ENCODE measurements at regions of chr14 and their contacts with region 1.

Region 1: DNA sequence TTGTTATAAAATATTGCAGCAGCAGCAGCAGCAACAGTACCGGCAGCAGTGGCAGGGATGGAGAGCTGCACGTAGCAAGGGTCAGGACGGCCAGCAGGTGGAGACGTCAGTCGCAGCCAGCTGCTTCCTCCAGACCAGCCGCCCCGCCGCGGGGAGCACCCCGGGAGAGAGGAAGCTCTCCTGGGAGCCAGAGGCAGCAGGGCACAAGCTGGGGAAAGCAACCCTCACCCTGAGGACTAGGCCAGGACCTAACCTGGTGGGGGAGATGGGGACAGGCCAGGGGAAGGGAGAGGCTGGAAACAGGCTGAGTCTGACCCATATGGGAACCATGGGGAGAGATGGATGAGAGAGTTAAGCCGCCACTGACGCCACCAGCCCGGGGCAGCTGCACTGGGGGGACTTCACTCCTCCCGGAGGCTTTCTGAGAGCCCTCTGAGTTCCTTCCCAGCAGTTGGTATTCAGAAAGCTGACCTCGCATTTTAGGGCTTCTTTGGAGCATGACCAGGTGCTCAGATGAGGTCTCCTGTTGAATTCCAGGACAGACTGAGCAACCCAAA is 56.3 kb downstream of the SPTB start:
- DNase-seq: peak; percentile 82
- H3K4me3 Mint-ChIP-seq: peak overlapping the region; percentile 13
- H3K27ac Mint-ChIP-seq: no peak overlapping the region
- H3K4me1 Mint-ChIP-seq: peaks cover 4% of the 10 kb centered on the region
- H3K27me3 Mint-ChIP-seq: peaks cover 8% of the 10 kb centered on the region

Region 2: DNA sequence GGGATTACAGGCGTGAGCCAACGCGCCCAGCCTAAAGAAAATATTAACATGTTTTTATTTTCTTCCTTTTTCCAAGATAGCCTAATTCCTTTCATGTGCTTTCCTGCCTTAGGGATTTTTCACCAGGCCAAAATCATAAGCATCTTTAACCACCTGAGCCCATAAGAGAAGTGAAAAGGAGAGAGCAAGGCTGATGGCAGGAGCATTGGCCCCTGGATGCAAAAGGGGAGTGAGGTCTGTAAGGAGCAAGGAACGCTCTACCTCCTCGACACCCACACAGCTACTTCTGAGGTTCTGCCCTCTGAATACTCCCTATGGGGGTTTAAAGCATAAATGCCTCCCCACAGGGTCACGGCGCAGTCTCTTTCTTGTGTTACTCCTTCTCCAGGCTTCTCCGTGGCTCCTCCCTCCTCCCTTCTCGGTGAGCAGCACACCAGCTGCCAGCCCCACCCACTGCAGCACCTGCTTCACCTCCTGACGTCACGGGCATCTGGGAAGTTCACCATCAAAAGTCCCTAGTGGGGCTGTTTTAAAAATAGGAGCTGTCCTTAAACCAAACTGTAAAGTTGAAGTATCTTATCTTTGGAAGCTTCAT is 11.1 kb before region 1 on chr14:
- CTCF ChIA-PET with region 1: interaction called, 10 read pairs
- intact Hi-C with region 1: no loop called
- DNase-seq: peak; percentile 86
- H3K4me3 Mint-ChIP-seq: no peak overlapping the region
- H3K27ac Mint-ChIP-seq: no peak overlapping the region
- H3K4me1 Mint-ChIP-seq: peaks cover 7% of the 10 kb centered on the region
- H3K27me3 Mint-ChIP-seq: peaks cover 2% of the 10 kb centered on the region

Region 3: DNA sequence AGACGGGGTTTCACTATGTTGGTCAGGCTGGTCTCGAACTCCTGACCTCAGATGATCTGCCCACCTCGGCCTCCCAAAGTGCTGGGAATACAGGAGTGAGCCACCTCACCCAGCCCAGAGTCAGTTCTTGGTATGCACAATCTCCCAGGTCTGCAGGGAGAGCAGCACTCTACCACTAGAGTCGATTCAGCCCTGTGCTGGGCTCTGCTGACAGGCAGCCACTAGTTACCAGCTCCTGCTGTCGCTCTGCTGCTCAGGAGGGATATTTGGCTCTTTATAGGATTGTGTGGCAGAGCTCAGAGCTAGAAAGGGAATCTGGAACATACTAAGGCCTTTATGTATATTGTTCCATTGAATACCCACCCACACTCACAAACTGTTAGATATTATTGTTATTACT is 12.0 kb after region 1 on chr14:
- CTCF ChIA-PET with region 1: interaction called, 14 read pairs
- intact Hi-C with region 1: no loop called
- DNase-seq: no peak
- H3K4me3 Mint-ChIP-seq: no peak overlapping the region
- H3K27ac Mint-ChIP-seq: no peak overlapping the region
- H3K4me1 Mint-ChIP-seq: no peaks in the 10 kb centered on the region
- H3K27me3 Mint-ChIP-seq: peaks cover 6% of the 10 kb centered on the region

Region 4: DNA sequence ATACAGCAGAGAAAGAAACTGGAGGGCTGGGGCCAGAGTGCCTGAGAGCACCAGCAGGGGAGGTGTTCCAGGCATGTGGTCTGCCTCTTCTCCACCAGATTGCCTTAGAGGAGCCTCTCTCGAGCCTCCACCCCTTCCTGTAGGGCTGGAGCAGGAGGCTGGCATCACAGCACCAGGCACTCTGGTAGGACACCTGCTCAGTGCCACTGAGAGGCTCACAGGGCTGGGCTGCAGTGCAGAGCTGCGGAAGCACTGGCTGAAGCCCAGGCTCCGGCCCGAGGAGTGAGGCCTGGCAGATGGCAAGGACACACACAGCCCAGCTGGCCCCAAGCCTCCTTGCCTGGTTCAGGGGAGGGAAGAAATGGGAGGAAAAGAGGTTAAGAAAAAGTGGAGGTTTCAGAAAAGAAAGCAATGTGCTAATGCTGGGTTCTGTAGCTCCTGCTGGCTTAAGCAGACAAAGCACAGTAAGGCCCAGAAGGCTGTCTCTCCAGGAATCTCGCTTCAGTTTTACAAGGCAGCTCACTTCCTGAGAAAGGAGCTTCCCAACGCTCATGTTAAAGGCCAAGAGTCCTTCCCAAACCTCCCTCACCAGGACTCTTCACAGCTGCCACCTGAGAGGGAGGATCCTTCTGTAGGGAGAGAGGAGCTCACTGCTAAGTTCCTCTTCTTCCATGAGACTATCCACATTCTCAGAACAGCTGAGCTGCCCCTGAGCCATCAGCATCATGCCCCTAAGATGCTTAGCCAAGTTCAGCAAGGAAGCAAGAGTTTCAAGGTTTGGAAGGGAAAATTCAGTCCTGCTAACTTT is 32.5 kb after region 1 on chr14:
- CTCF ChIA-PET with region 1: no interaction called
- intact Hi-C with region 1: no loop called
- DNase-seq: no peak
- H3K4me3 Mint-ChIP-seq: no peak overlapping the region
- H3K27ac Mint-ChIP-seq: no peak overlapping the region
- H3K4me1 Mint-ChIP-seq: no peaks in the 10 kb centered on the region
- H3K27me3 Mint-ChIP-seq: peaks cover 6% of the 10 kb centered on the region

Region 5: DNA sequence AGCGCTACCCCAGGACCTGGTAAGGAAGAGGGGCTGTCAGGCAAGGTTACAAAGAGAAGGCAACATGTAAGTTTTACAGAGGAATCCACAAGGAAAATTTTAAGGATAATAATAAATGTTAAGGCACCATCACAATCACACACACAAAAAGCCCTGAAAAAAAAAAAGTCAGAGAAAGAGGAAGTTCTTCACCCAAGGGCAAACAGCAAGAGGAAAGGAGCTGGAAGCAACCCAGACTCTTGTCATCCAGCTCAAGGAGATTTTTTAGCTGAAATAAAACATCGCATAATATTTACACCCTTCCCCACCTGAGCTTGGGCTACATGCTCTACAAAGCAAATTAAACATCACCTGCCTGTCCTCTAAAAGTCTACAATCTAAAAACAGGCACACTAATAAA is 46.8 kb after region 1 on chr14:
- CTCF ChIA-PET with region 1: interaction called, 12 read pairs
- intact Hi-C with region 1: no loop called
- DNase-seq: no peak
- H3K4me3 Mint-ChIP-seq: no peak overlapping the region
- H3K27ac Mint-ChIP-seq: no peak overlapping the region
- H3K4me1 Mint-ChIP-seq: no peaks in the 10 kb centered on the region
- H3K27me3 Mint-ChIP-seq: peaks cover 10% of the 10 kb centered on the region

Region 6: DNA sequence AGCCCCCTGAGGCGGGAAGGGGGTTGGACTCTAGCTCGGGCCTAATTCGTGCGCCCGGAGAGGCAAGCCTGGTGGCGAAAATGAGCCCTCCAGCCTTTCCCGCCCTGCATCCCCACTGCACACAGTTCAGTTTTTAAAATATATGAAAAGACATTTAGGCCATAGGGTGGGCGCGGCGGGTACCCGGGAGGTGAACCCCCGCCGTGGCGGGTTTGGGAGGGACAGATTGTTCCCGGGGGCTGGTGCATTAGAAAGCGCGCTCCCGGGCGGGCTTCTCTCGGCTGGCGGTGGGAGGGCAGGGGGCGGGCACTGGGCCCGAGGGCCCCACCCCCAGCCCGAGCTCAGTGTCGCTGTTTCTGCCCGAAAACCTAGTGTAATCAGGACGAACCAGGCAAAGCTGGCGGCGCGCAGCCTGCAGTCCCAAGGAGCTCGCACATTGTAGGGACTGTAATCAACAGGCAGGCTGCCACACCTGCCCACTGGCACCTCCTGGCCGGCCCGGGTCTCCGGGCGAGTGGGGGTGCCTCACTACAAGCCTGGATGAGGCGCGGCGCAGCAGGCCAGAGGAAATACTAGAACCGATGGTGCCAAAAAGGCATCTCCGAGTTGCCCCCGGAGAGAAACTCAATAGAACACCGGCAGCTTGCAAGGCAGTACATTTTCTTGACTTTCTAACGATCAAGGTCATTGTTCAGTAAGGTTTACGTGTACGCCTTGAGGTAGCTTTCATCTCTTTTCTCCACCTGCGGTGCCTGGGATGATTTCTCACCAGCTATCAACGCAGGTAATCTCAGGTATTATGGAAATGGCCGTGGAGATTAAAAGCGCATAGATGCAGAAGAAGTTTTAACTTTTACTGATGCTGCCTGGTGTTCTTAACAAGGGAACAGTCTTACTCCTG is 57.1 kb after region 1 on chr14:
- CTCF ChIA-PET with region 1: interaction called, 27 read pairs
- intact Hi-C with region 1: no loop called
- DNase-seq: peak; percentile 67
- H3K4me3 Mint-ChIP-seq: peak overlapping the region; percentile 81
- H3K27ac Mint-ChIP-seq: no peak overlapping the region
- H3K4me1 Mint-ChIP-seq: peaks cover 1% of the 10 kb centered on the region
- H3K27me3 Mint-ChIP-seq: peaks cover 13% of the 10 kb centered on the region

Region 7: GRCh38 chr14:64914237-64914971 is 91.0 kb after region 1 on chr14 and contains the start of gene CHURC1:
- CTCF ChIA-PET with region 1: interaction called, 14 read pairs
- intact Hi-C with region 1: no loop called
- DNase-seq: peak; percentile 98
- H3K4me3 Mint-ChIP-seq: peak within 1 kb of the TSS; percentile 78
- H3K27ac Mint-ChIP-seq: peak within 1 kb of the TSS; percentile 88
- H3K4me1 Mint-ChIP-seq: peaks cover 51% of the 10 kb centered on the region
- H3K27me3 Mint-ChIP-seq: no peaks in the 10 kb centered on the region
- total RNA-seq, gene CHURC1: 49.6 to 59.7 TPM

Region 8: GRCh38 chr14:64960762-64961278 is 137.4 kb after region 1 on chr14:
- CTCF ChIA-PET with region 1: no interaction called
- intact Hi-C with region 1: no loop called
- DNase-seq: no peak
- H3K4me3 Mint-ChIP-seq: no peak overlapping the region
- H3K27ac Mint-ChIP-seq: no peak overlapping the region
- H3K4me1 Mint-ChIP-seq: no peaks in the 10 kb centered on the region
- H3K27me3 Mint-ChIP-seq: no peaks in the 10 kb centered on the region

Region 9: GRCh38 chr14:65170768-65171507 is 347.6 kb after region 1 on chr14:
- CTCF ChIA-PET with region 1: no interaction called
- intact Hi-C with region 1: no loop called
- DNase-seq: peak; percentile 78
- H3K4me3 Mint-ChIP-seq: peak overlapping the region; percentile 67
- H3K27ac Mint-ChIP-seq: no peak overlapping the region
- H3K4me1 Mint-ChIP-seq: peaks cover 15% of the 10 kb centered on the region
- H3K27me3 Mint-ChIP-seq: peaks cover 4% of the 10 kb centered on the region

Measured in activated naive CD4-positive, alpha-beta T cell treated with anti-CD3 and anti-CD28 coated beads for 36 hours (primary cell).